HEK293 (cell line): ENCODE measurements at regions of chr9 and their contacts with region 1.

Region 1: GRCh38 chr9:113657703-113658544 is 194.4 kb downstream of the RGS3 start:
- H3K4me3 ChIP-seq: no peak overlapping the region
- H3K27ac ChIP-seq: no peak overlapping the region
- H3K4me1 ChIP-seq: no peaks in the 10 kb centered on the region
- CTCF ChIP-seq: peak; percentile 85

Region 2: GRCh38 chr9:113275157-113276131 is 382.5 kb before region 1 on chr9 and contains the starts of genes CDC26 and PRPF4:
- CTCF ChIA-PET with region 1: interaction called, 64 read pairs
- POLR2A ChIA-PET with region 1: interaction called, 5 read pairs
- H3K4me3 ChIP-seq: peak within 1 kb of the TSS; percentile 85
- H3K27ac ChIP-seq: peak within 1 kb of the TSS; percentile 49
- H3K4me1 ChIP-seq: 0 out of 2 replicates have a peak, but pooled peaks cover 3% of the 10 kb centered on the region
- CTCF ChIP-seq: no peak

Region 3: DNA sequence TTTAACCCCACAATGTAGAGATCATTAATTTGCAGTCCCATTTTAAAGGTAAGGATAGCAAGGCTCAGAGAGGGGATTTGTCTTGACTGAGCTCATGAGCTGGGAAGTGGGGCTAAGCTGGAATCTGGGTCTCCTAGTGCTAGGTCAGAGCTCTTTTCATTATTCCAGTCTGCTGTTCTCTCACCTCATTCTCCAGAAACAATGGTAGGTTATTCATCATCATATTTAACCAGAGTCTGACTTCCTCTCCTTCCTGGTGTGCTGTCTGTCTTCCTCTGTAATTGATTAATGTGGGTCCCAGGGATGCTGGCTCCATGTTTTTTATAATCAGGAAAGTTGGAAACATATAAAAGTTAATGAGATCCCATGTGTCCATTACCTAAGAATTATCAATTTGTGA is 226.7 kb before region 1 on chr9:
- CTCF ChIA-PET with region 1: interaction called, 13 read pairs
- POLR2A ChIA-PET with region 1: no interaction called
- H3K4me3 ChIP-seq: no peak overlapping the region
- H3K27ac ChIP-seq: no peak overlapping the region
- H3K4me1 ChIP-seq: no peaks in the 10 kb centered on the region
- CTCF ChIP-seq: no peak

Region 4: DNA sequence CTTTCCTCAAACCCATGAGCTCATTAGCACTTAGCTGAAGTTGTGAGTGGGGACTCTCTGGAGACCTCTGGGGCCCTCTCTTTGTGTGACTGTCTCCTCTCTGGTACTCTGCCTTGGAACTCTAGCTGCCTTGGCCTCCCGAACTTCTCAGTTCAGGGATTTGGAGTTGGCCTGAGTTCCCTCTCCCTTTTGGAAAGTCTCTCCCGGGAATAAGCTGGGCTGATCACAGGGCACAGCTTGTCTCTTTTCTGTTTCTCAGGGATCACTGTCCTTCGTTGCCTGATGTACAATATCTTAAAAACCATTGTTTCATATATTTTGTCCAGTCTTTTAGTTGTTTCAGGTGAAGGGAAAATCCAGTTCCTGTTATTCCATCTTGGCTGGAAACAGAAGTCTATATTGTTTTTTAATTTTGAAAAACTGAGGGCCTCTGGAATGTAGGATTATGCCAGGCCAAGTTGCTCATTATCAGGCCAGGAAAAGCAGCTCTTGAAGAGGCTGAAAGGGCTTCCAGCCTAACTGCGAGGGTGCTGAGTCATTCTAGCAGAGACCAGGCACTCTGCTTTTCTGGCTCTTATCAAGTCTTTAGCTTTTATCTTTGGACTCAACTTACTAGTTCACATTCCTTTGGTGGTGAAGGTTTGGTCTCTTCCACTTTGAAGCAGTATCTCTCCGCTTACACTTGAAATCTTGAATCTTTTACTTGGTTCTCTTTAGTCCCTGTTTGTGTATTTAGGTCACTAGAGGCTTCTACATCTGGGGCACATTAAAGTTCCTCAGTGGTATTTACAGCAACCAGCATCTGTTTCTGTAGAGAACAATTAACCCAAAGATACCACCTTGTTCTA is 202.8 kb before region 1 on chr9:
- CTCF ChIA-PET with region 1: interaction called, 24 read pairs
- POLR2A ChIA-PET with region 1: no interaction called
- H3K4me3 ChIP-seq: no peak overlapping the region
- H3K27ac ChIP-seq: no peak overlapping the region
- H3K4me1 ChIP-seq: peaks cover 3% of the 10 kb centered on the region; the same call in 1 of the 2 replicates
- CTCF ChIP-seq: no peak

Region 5: GRCh38 chr9:113591001-113591898 is 66.7 kb before region 1 on chr9:
- CTCF ChIA-PET with region 1: interaction called, 831 read pairs
- POLR2A ChIA-PET with region 1: interaction called, 11 read pairs
- H3K4me3 ChIP-seq: no peak overlapping the region
- H3K27ac ChIP-seq: no peak overlapping the region
- H3K4me1 ChIP-seq: no peaks in the 10 kb centered on the region
- CTCF ChIP-seq: peak; percentile 63

Region 6: DNA sequence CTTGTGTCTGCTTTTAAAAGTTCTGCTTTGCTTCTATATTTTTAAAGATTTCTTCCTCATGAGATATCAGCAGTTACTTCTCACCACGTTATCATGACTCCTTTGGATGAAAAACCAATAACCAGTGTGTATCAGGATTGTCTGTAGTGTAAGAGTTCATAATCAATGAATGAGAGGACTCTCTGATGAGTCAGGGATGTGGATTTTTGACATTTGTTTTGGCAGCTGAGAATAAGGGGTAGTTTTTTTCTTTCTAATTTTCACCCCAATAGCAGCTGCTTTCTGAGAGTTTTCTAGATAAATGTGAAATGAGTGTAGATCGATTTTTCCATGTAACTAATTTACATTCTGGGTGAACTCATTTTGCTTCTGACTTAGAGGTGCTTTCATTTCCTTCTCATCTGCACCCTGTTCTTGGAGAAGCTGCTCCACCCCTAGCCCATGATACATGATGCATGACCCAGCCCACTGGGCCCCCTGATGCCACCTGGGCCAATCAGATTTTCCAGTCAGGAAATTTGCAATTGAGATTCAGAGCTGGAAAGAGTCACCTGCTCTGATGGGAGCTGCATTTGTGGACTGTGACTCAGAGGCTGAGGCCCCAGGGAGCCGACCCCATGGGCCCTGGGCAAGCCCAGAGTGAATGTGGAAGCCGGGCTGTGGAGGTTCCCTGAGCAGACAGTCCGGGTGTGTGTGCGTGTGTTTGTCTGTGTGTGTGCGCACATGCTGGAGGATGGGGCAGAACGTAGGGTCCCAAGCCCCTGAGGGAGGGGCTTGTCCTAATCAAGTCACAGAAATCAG is 35.1 kb before region 1 on chr9:
- CTCF ChIA-PET with region 1: interaction called, 17 read pairs
- POLR2A ChIA-PET with region 1: interaction called, 3 read pairs
- H3K4me3 ChIP-seq: no peak overlapping the region
- H3K27ac ChIP-seq: no peak overlapping the region; the same call in 1 of the 2 replicates
- H3K4me1 ChIP-seq: peaks cover 7% of the 10 kb centered on the region; the same call in 1 of the 2 replicates
- CTCF ChIP-seq: no peak

Region 7: GRCh38 chr9:113668061-113668460 is 10.1 kb after region 1 on chr9:
- CTCF ChIA-PET with region 1: interaction called, 27 read pairs
- POLR2A ChIA-PET with region 1: no interaction called
- H3K4me3 ChIP-seq: no peak overlapping the region
- H3K27ac ChIP-seq: no peak overlapping the region
- H3K4me1 ChIP-seq: no peaks in the 10 kb centered on the region
- CTCF ChIP-seq: no peak

Region 8: DNA sequence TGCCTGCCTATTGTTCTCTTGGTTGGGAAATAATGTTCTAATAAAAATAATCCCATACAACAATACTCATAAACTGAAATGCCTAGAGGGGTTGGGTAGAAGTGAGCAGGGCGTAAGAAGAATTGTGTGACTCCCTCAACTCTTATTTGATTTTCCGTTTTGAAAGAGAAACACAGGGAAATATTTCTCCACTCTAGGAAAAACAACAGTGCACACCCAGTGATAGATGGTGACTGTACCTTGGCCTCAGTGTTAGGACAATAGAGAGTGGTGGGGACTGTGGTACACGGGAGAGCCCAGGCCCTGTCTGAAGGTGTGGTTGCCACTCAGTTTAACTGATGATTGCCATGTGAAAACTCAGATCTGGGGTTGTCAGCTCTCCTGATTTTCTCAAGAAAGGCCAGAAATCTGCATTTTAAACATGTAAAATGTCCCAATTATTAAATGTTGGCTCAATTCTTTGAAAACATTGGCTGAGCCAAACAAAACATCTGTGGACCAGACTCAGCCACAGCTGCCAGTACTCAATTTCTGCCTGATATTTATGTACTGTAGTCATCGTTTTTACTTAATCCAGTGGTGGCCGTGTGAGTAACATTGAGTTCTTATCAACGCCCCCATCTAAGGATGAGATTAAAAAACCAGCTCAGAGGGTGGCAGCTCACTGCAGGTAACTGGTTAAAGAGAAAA is 114.3 kb after region 1 on chr9:
- CTCF ChIA-PET with region 1: no interaction called
- POLR2A ChIA-PET with region 1: no interaction called
- H3K4me3 ChIP-seq: no peak overlapping the region
- H3K27ac ChIP-seq: no peak overlapping the region
- H3K4me1 ChIP-seq: no peaks in the 10 kb centered on the region
- CTCF ChIP-seq: no peak